H1 (cell line): ENCODE measurements at regions of chr2 and their contacts with region 1.

Region 1: GRCh38 chr2:112032689-112033465 is 22.2 kb upstream of the TMEM87B start:
- DNase-seq: peak in 1 of 2 experiments; percentile 27
- H3K4me3 ChIP-seq: no peak overlapping the region
- H3K27ac ChIP-seq: no peak overlapping the region
- H3K4me1 ChIP-seq: peaks cover 0 to 9% (median 5%) of the 10 kb centered on the region in 4 experiments; a peak in 4 of 7 replicates
- H3K27me3 ChIP-seq: no peaks in the 10 kb centered on the region
- CTCF ChIP-seq: no peak
- EP300 ChIP-seq: no peak
- POLR2A ChIP-seq: no peak
- RAD21 ChIP-seq: no peak

Region 2: GRCh38 chr2:112007493-112007892 is 25.4 kb before region 1 on chr2:
- CTCF ChIA-PET with region 1: no interaction called
- POLR2A ChIA-PET with region 1: no interaction called
- DNase-seq: no peak
- H3K4me3 ChIP-seq: no peak overlapping the region
- H3K27ac ChIP-seq: no peak overlapping the region
- H3K4me1 ChIP-seq: no peaks in the 10 kb centered on the region
- H3K27me3 ChIP-seq: no peaks in the 10 kb centered on the region; a peak in 1 of 7 replicates
- CTCF ChIP-seq: no peak
- EP300 ChIP-seq: no peak
- POLR2A ChIP-seq: no peak
- RAD21 ChIP-seq: no peak

Region 3: GRCh38 chr2:112021781-112022231 is 11.1 kb before region 1 on chr2:
- CTCF ChIA-PET with region 1: interaction called, 28 read pairs
- POLR2A ChIA-PET with region 1: no interaction called
- DNase-seq: no peak
- H3K4me3 ChIP-seq: no peak overlapping the region
- H3K27ac ChIP-seq: no peak overlapping the region
- H3K4me1 ChIP-seq: no peaks in the 10 kb centered on the region
- H3K27me3 ChIP-seq: no peaks in the 10 kb centered on the region
- CTCF ChIP-seq: no peak
- EP300 ChIP-seq: no peak
- POLR2A ChIP-seq: no peak
- RAD21 ChIP-seq: no peak